ENCODE measurements at regions of chr1 and their contacts with region 1.

Region 1: GRCh38 chr1:224503161-224504118 is 68.8 kb upstream of the WDR26 start:
- DNase-seq: peak; percentile 99 to 100 (median 100)
- ATAC-seq: peak; percentile 97
- H3K4me3 ChIP-seq: peak overlapping the region; percentile 18; the same call in 1 of the 2 replicates
- H3K27ac ChIP-seq: peak overlapping the region; percentile 60
- H3K4me1 ChIP-seq: peaks cover 44 to 45% of the 10 kb centered on the region in 2 experiments
- H3K27me3 ChIP-seq: no peaks in the 10 kb centered on the region
- CTCF ChIP-seq: peak; percentile 66 to 73 (median 68)
- EP300 ChIP-seq: peak; percentile 96
- POLR2A ChIP-seq: 0 out of 2 replicates have a peak, but pooled peaks have one; percentile 35
- RAD21 ChIP-seq: peak; percentile 51 to 72

Region 2: DNA sequence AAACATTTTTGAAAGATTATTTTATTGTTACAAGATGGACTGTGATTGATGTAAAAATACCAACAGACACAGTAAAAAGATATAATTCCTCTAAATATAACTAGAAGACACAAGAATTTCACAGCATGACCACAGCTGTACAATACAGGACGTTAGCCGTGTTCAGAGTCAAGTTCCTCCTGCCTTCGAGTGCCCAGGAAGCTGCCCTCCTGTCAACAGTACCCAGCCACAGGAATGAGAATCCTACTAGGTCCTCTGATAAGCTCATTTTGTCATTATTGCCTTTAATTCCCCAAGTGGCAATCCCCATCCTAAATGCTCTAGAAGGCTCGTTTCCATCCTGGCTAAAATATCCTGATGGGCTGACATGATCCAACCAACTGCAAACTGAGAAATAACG is 807.5 kb before region 1 on chr1:
- CTCF ChIA-PET with region 1: no interaction called
- POLR2A ChIA-PET with region 1: no interaction called
- in situ Hi-C with region 1: no loop called
- intact Hi-C with region 1: loop called (anchors 5 kb)
- DNase-seq: no peak
- ATAC-seq: no peak
- H3K4me3 ChIP-seq: no peak overlapping the region
- H3K27ac ChIP-seq: no peak overlapping the region
- H3K4me1 ChIP-seq: peaks cover 10 to 15% of the 10 kb centered on the region in 2 experiments
- H3K27me3 ChIP-seq: no peaks in the 10 kb centered on the region
- CTCF ChIP-seq: no peak
- EP300 ChIP-seq: no peak
- POLR2A ChIP-seq: no peak
- RAD21 ChIP-seq: no peak

Region 3: GRCh38 chr1:224058303-224058702 is 445.1 kb before region 1 on chr1:
- CTCF ChIA-PET with region 1: no interaction called
- POLR2A ChIA-PET with region 1: no interaction called
- in situ Hi-C with region 1: no loop called
- intact Hi-C with region 1: no loop called
- DNase-seq: no peak
- ATAC-seq: no peak
- H3K4me3 ChIP-seq: no peak overlapping the region
- H3K27ac ChIP-seq: no peak overlapping the region
- H3K4me1 ChIP-seq: peaks cover 4 to 6% of the 10 kb centered on the region in 2 experiments; a peak in 3 of 5 replicates
- H3K27me3 ChIP-seq: no peaks in the 10 kb centered on the region
- CTCF ChIP-seq: no peak
- EP300 ChIP-seq: no peak
- POLR2A ChIP-seq: no peak
- RAD21 ChIP-seq: no peak

Region 4: GRCh38 chr1:224356685-224357625 is 146.5 kb before region 1 on chr1 and contains the start of gene CNIH4:
- CTCF ChIA-PET with region 1: no interaction called
- POLR2A ChIA-PET with region 1: no interaction called
- in situ Hi-C with region 1: no loop called
- intact Hi-C with region 1: loop called (anchors 2 kb)
- DNase-seq: peak; percentile 94 to 97 (median 96)
- ATAC-seq: peak; percentile 95
- H3K4me3 ChIP-seq: peak within 1 kb of the TSS; percentile 79
- H3K27ac ChIP-seq: peak within 1 kb of the TSS; percentile 46
- H3K4me1 ChIP-seq: peaks cover 12 to 16% of the 10 kb centered on the region in 2 experiments
- H3K27me3 ChIP-seq: no peaks in the 10 kb centered on the region
- CTCF ChIP-seq: no peak; a peak in 1 of 6 replicates
- EP300 ChIP-seq: no peak
- POLR2A ChIP-seq: peak; percentile 84
- RAD21 ChIP-seq: no peak
- polyA plus RNA-seq, gene CNIH4: 237 to 266 TPM

Region 5: GRCh38 chr1:224454397-224455066 is 48.9 kb before region 1 on chr1:
- CTCF ChIA-PET with region 1: no interaction called
- POLR2A ChIA-PET with region 1: no interaction called
- in situ Hi-C with region 1: no loop called
- intact Hi-C with region 1: loop called (anchors 1 kb)
- DNase-seq: peak in 1 of 4 experiments; percentile 2
- ATAC-seq: no peak
- H3K4me3 ChIP-seq: no peak overlapping the region
- H3K27ac ChIP-seq: no peak overlapping the region
- H3K4me1 ChIP-seq: peaks cover 12 to 20% of the 10 kb centered on the region in 2 experiments
- H3K27me3 ChIP-seq: no peaks in the 10 kb centered on the region; a peak in 1 of 5 replicates
- CTCF ChIP-seq: no peak
- EP300 ChIP-seq: no peak
- POLR2A ChIP-seq: no peak
- RAD21 ChIP-seq: no peak

Region 6: GRCh38 chr1:224579526-224579925 is 76.1 kb after region 1 on chr1:
- CTCF ChIA-PET with region 1: no interaction called
- POLR2A ChIA-PET with region 1: no interaction called
- in situ Hi-C with region 1: no loop called
- intact Hi-C with region 1: no loop called
- DNase-seq: no peak
- ATAC-seq: no peak
- H3K4me3 ChIP-seq: no peak overlapping the region
- H3K27ac ChIP-seq: no peak overlapping the region
- H3K4me1 ChIP-seq: no peaks in the 10 kb centered on the region
- H3K27me3 ChIP-seq: peaks cover 3 to 5% of the 10 kb centered on the region in 2 experiments; a peak in 3 of 5 replicates
- CTCF ChIP-seq: no peak
- EP300 ChIP-seq: no peak
- POLR2A ChIP-seq: no peak
- RAD21 ChIP-seq: no peak

Region 7: DNA sequence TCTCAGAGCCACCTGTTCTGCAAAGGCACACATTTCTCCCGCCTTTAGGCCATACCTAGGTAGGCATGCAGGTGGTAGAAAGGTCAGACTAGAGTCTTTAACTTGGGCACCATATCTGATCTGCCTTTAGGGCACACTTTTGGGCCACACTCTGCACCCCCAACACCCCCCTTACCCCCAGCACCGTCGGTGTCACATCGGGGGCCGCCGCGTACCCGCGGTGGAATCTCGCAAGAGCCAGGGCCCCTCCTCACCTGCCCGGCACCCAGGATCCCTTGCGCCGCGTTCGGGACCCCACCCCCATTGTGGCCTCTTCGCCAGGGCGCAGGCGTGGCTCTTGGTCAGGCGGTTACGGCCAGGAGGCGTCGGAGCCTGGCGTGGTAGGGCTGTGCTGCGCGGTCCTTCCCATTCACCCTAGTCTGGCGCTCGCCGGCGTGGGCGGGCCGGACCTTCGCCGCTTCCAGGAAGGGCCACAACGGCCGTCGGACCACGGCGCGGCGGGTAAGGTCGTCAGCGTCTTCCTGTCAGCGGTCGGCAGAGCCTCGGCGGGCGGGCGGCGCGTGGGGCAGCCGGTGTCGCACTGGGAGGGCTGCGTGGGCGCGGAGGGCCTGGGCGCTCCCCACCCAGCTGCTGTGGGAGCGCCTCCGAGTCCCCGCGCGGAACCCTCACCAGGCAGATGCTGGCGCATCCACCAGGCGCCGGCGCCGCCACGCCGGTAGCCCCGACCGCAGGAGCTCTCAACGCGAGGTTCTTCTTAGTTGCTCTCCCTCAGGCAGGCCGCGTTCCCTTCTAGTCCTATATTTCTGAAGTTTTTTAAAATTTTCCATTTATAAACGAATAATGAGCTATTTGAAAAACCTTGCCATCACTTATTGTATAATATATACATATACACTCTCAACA is 426.1 kb after region 1 on chr1 and contains the start of gene DNAH14:
- CTCF ChIA-PET with region 1: no interaction called
- POLR2A ChIA-PET with region 1: no interaction called
- in situ Hi-C with region 1: loop called (anchors 5 kb)
- intact Hi-C with region 1: no loop called
- DNase-seq: peak; percentile 90 to 96 (median 92)
- ATAC-seq: peak; percentile 99
- H3K4me3 ChIP-seq: peak within 1 kb of the TSS; percentile 62
- H3K27ac ChIP-seq: peak within 1 kb of the TSS; percentile 88
- H3K4me1 ChIP-seq: peaks cover 0 to 9% of the 10 kb centered on the region in 2 experiments; a peak in 3 of 5 replicates
- H3K27me3 ChIP-seq: no peaks in the 10 kb centered on the region
- CTCF ChIP-seq: no peak
- EP300 ChIP-seq: peak; percentile 31
- POLR2A ChIP-seq: peak; percentile 93
- RAD21 ChIP-seq: 0 out of 4 replicates have a peak, but pooled peaks of 1 of the 2 experiments have one; percentile 6
- polyA plus RNA-seq, gene DNAH14: 58.4 to 64.5 TPM

Measured in K562 (cell line).